MCF 10A (cell line): ENCODE measurements at regions of chr20 and their contacts with region 1.

Region 1: DNA sequence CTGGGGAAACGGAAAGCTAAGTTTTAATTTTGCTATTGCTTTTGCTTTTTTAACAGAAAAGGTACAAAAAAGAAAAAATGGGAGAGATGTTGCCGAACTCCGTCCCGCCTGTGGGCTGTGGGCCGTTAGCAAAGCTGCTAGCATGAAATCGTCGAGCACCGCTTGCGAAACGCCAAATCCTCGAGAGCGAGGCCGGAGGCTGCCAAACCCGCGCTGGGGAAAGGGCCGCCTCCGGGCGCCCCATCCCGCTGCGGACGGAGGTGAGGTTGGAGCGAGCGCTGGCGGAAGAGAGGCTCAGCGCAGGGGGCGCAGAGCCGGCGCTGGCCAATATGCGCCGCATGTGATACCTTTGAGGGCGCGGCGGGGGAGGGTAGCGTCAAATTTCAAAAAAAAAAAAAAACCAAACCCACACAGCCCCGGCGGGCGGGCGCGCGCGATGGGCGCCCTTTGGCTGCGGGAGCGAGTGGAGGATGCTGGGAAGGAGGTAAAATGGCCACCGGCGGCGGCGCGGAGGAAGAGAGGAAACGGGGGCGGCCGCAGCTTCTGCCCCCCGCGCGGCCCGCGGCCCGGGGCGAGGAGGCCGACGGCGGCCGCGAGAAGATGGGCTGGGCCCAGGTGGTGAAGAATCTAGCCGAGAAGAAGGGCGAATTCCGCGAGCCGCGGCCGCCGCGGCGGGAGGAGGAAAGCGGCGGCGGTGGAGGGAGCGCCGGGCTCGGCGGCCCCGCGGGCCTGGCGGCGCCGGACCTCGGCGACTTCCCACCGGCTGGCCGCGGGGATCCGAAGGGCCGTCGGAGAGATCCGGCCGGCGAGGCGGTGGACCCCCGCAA is at the start of gene ZCCHC3:
- DNase-seq: peak; percentile 96
- H3K4me3 Mint-ChIP-seq: peak within 1 kb of the TSS; percentile 93
- H3K27ac Mint-ChIP-seq: peak within 1 kb of the TSS; percentile 99
- H3K4me1 Mint-ChIP-seq: peaks cover 31% of the 10 kb centered on the region
- H3K27me3 Mint-ChIP-seq: no peaks in the 10 kb centered on the region
- CTCF ChIP-seq: no peak
- total RNA-seq, gene ZCCHC3: 11.7 and 12.1 TPM in 2 replicates

Region 2: DNA sequence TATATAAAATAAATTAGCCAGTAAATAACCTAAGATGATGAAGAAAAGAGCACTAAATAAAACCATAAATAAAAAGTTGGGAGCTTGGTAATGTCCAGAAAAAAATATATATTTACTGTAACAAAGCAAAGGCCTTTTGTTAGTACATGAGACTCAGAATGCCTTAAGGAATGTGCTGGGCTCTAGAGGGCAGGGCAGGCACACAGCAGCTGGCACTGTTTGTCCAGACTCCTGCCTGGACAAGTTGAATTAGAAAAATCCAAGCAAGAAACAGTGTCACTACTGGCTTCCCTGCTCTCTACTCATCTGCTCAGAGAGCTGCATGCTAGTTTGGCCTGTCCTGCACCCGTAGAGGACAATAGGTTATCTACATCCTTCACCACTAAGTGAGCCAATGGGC is 61.4 kb before region 1 on chr20:
- CTCF ChIA-PET with region 1: interaction called, 3 read pairs
- POLR2A ChIA-PET with region 1: interaction called, 18 read pairs
- intact Hi-C with region 1: no loop called
- DNase-seq: peak; percentile 47
- H3K4me3 Mint-ChIP-seq: no peak overlapping the region
- H3K27ac Mint-ChIP-seq: peak overlapping the region; percentile 39
- H3K4me1 Mint-ChIP-seq: peaks cover 5% of the 10 kb centered on the region
- H3K27me3 Mint-ChIP-seq: peaks cover 25% of the 10 kb centered on the region
- CTCF ChIP-seq: peak; percentile 25

Region 3: DNA sequence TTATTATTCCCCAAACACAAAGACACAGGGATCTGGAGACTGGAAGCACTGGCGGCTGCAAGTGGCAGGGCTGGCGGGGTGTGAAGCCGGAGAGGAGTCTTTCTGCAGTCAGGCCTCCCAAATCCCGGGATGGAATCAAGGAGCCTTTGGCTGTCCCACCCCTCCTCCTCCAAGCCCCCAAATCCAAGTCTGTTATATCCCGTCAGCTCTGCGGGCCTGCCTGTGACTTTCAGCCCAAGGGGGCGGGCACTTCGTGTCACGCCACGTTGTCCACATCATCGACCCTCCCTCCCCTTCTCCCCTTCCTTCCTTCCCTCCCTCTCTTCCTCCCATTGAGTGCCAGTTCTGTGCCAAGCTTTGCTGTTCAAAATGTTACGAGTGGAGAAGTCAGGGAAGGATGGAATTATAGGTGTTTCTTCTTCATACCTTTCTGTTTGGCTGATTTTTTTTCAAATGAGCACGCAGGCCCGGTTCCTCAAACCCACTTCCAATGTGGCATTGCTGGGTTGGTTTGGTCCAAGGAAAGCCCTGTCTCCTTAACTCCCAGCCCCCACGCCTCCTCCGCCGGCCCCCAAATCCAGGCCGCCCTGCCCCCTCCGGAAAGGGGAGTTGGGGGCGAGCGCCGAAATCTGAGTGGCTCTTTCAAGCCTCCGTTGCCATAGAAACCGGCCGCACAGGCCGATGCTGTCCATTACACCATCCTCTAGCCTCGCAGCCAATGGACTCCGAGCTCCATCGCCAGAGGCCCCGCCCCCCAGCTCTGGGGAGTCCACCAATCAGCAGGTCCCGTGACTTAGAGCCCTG is 12.7 kb after region 1 on chr20:
- CTCF ChIA-PET with region 1: interaction called, 7 read pairs
- POLR2A ChIA-PET with region 1: interaction called, 60 read pairs
- intact Hi-C with region 1: no loop called
- DNase-seq: no peak
- H3K4me3 Mint-ChIP-seq: no peak overlapping the region
- H3K27ac Mint-ChIP-seq: no peak overlapping the region
- H3K4me1 Mint-ChIP-seq: peaks cover 18% of the 10 kb centered on the region
- H3K27me3 Mint-ChIP-seq: no peaks in the 10 kb centered on the region
- CTCF ChIP-seq: no peak

Region 4: DNA sequence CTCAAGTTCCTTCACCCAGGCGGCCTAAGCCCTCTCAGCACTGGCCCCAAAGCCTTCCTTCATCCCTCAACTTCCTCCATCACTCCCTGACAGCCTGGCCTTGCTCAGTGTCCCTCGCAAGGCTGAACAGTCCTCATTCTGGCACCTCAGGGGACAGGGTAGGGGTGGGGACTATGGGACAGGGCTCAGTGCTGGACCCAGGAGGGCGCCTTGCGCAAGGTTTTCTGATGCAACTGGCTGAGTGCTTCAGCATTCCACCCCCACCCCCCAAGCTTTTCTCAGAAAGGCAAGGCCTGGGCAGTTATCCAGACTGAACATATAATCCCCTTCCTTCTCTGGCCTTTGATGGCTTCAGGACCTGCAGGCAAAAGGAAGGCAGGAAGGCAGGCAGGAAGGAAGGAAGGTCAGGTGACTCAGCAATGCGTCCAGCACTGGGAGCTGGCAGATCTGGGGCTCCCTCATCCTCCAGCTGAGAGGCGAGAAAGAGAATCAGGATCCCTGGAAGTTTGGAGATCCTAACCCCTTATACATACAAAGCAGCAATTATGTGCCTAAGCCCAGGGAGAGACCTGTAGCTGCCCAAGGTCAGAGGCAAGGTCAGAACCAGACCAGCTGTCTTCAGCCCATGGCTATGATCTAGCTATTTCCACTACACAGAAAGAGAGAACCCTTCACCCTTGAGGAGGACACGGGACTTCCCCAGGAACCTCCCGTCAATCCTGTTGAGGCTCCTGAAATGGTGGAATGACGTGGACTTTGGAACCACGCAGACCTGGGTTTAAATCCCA is 74.6 kb after region 1 on chr20:
- CTCF ChIA-PET with region 1: no interaction called
- POLR2A ChIA-PET with region 1: interaction called, 11 read pairs
- intact Hi-C with region 1: no loop called
- DNase-seq: peak; percentile 100
- H3K4me3 Mint-ChIP-seq: peak overlapping the region; percentile 26
- H3K27ac Mint-ChIP-seq: peak overlapping the region; percentile 95
- H3K4me1 Mint-ChIP-seq: peaks cover 56% of the 10 kb centered on the region
- H3K27me3 Mint-ChIP-seq: no peaks in the 10 kb centered on the region
- CTCF ChIP-seq: no peak